ENCODE measurements at regions of chr17 and their contacts with region 1.

Region 1: GRCh38 chr17:31533546-31534155 is 142.2 kb downstream of the RAB11FIP4 start:
- DNase-seq: peak; percentile 69
- H3K4me3 ChIP-seq: no peak overlapping the region
- H3K27ac ChIP-seq: no peak overlapping the region
- H3K4me1 ChIP-seq: peaks cover 11% of the 10 kb centered on the region
- H3K27me3 ChIP-seq: no peaks in the 10 kb centered on the region
- CTCF ChIP-seq: peak; percentile 4 to 19

Region 2: GRCh38 chr17:31494259-31495021 is 39.2 kb before region 1 on chr17:
- CTCF ChIA-PET with region 1: no interaction called
- dilution Hi-C with region 1: loop called (anchors 5 kb)
- in situ Hi-C with region 1: no loop called
- intact Hi-C with region 1: no loop called
- DNase-seq: peak; percentile 67
- H3K4me3 ChIP-seq: no peak overlapping the region
- H3K27ac ChIP-seq: no peak overlapping the region
- H3K4me1 ChIP-seq: peaks cover 13% of the 10 kb centered on the region
- H3K27me3 ChIP-seq: peaks cover 2% of the 10 kb centered on the region
- CTCF ChIP-seq: no peak

Measured in mammary epithelial cell (primary cell).